Caco-2 (cell line): ENCODE measurements at regions of chr19 and their contacts with region 1.

Region 1: DNA sequence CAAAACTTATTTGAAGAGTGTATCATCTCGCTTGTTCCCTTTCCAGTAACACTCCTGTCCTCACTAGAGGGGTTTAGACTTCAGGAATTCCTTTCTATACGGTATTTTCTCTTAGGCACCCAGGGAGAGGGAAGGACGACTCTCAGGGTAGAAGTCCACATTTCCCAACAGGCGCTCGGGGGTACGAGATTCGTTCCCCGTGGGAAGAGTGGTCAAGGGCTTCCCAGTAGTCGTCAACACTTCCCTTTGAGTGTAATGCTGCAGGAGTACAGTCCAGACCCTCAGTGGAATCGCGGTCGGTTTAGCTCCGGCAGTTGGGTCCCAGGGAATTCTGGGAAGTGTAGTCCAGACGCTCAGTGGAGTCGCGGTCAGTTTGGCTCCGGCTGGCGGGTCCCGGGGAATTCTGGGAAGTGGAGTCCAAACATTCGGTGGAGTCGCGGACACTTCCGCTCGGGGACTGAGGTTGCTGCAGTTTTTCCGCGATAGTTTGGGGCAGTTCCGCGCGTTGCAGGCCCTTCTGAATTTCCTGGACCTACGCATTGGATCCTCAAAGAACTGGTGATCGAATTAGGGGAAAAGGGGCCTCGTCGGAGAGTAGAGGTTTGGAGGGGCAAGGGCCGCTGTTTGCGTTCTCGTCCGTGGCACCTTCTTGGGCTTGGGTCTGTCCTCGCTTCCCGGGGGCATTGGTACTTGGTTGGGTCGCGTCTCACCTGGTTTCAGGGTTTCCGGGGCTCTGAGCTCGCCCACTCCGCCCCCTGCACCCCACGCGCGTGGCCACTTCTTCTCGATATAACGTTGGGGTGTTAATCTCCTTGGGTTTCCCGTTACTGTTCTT is at the start of gene ZNF224:
- DNase-seq: peak; percentile 92 to 94
- H3K4me3 ChIP-seq: peak within 1 kb of the TSS; percentile 74
- H3K4me3 Mint-ChIP-seq: peak within 1 kb of the TSS; percentile 92
- H3K27ac Mint-ChIP-seq: peak within 1 kb of the TSS; percentile 90
- H3K4me1 ChIP-seq: no peaks in the 10 kb centered on the region
- H3K4me1 Mint-ChIP-seq: no peaks in the 10 kb centered on the region
- H3K27me3 ChIP-seq: no peaks in the 10 kb centered on the region
- H3K27me3 Mint-ChIP-seq: no peaks in the 10 kb centered on the region
- CTCF ChIP-seq: no peak
- total RNA-seq, gene ZNF224: 24.7 and 25.9 TPM in 2 replicates

Region 2: DNA sequence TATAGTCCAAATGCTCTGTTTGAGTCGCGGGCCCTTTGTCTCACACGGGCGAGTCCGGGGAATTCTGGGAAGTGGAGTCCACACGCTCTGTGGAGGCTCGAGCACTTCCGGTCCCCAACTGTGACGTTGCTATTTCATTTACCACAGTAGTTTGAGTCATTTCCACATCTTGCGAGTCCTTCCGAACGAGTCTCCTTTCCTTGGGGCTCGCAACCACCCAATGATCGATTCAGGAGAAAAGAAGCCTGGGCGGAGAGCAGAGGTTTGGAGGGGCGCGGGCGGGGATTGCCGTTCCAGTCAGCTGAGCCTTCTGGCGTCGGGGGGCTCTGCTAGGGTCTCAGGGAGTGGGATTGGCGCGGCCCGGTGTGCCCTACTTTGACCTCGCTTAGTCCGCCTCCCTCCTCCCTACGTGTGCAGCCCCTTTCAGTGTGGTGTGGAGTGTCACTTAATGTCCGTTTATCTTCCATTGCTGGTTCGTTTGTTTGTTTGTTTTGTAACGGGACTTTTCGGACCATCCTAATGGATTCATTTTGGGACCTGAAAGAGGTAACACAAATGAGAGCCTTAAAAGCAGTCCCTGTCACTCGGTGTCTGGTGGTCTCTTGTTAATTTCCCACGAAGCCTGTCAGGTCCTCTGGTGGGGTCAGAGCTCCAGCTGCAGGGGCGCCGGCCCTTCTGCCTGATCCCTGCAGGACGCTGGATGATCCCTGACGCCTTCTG is 68.8 kb before region 1 on chr19 and contains the start of gene ZNF222:
- CTCF ChIA-PET with region 1: no interaction called
- POLR2A ChIA-PET with region 1: no interaction called
- intact Hi-C with region 1: loop called (anchors 1 kb)
- DNase-seq: peak; percentile 75 to 83
- H3K4me3 ChIP-seq: peak within 1 kb of the TSS; percentile 84
- H3K4me3 Mint-ChIP-seq: peak within 1 kb of the TSS; percentile 99
- H3K27ac Mint-ChIP-seq: peak within 1 kb of the TSS; percentile 96
- H3K4me1 ChIP-seq: peaks cover 14% of the 10 kb centered on the region
- H3K4me1 Mint-ChIP-seq: peaks cover 12% of the 10 kb centered on the region
- H3K27me3 ChIP-seq: no peaks in the 10 kb centered on the region
- H3K27me3 Mint-ChIP-seq: peaks cover 5% of the 10 kb centered on the region
- CTCF ChIP-seq: no peak
- total RNA-seq, gene ZNF222: 4.4 and 5.6 TPM in 2 replicates

Region 3: DNA sequence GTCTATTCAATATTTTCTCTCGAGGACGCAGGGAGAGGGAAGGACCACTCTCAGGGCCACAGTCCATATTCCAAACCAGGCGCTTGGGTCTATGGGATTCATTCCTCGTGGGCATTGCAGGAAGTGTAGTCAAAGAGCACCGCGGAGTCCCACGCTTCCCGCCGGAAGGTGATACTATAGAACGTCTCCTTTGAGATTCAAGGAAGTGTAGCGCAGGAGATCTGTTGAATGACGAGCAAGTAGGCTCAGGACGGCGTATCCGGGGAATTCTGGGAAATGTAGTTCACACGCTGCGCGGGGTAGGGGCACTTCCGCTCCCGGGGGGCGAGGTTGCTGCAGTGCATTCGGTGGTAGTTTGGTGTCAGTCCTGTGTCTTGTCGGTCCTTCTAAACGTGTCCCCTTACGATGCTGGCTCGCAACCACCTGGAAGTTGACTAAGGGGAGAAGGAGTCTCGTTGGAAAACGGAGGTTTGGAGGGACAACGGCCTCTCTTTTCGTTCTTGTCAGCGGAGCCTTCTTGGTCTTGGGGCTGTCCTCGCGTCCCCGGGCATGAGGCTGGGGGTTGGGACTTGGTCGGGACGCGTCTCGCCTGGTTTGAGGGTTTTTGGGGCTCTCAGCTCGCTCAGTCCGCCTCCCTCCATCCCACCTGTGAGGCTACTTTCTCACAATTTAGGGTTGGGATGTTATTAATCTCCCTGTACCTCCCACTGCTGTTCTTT is 22.2 kb before region 1 on chr19 and contains the start of gene ZNF284:
- CTCF ChIA-PET with region 1: interaction called, 3 read pairs
- POLR2A ChIA-PET with region 1: no interaction called
- intact Hi-C with region 1: loop called (anchors 1 kb)
- DNase-seq: peak; percentile 91 to 94
- H3K4me3 ChIP-seq: peak within 1 kb of the TSS; percentile 77
- H3K4me3 Mint-ChIP-seq: peak within 1 kb of the TSS; percentile 83
- H3K27ac Mint-ChIP-seq: peak within 1 kb of the TSS; percentile 85
- H3K4me1 ChIP-seq: peaks cover 3% of the 10 kb centered on the region; the same call in 1 of the 2 replicates
- H3K4me1 Mint-ChIP-seq: peaks cover 14% of the 10 kb centered on the region
- H3K27me3 ChIP-seq: no peaks in the 10 kb centered on the region
- H3K27me3 Mint-ChIP-seq: no peaks in the 10 kb centered on the region
- CTCF ChIP-seq: no peak
- total RNA-seq, gene ZNF284: 2.3 and 3.6 TPM in 2 replicates

Region 4: DNA sequence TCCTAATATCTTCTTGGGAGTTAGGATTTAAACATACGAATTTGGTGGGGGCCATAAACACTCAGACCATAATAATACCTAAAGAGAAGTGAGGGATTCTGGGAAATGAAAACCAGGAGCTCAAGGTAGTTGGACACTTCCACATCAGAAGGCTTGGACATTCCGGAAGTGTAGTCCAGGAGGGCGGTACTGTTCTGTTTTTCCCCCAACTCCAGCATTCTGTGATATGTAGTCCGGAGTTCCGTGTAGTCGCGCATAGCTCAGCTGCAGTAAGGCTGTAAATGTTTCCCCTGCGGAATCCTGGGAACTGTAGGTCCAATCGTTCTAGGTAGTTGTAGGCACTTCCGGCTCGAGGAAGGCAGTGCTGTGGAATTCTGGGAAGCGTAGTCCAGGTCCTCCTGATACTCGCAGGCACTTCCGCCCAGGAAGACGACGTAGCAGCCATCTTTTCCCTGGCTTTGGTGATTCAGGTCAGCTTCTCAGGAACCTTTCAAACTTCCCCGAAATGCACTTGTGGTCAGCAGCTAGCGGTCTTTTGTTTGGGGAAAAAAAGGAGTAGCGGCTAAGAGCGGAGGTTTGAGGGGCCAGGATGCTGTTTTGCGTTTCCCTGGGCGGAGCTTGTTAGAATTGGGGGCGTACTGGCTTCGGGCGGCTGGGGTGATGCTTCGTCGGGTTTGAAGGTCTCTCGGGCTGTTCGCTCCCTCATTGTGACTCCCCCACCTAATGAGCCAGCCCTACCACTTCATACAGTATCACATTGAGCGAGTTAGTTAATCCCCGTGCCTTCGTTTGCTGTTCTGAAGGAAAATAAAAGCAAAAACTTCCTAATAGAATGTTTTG is 70.7 kb after region 1 on chr19 and contains the start of gene ZNF226:
- CTCF ChIA-PET with region 1: no interaction called
- POLR2A ChIA-PET with region 1: interaction called, 7 read pairs
- intact Hi-C with region 1: loop called (anchors 1 kb)
- DNase-seq: peak; percentile 95 to 98
- H3K4me3 ChIP-seq: peak within 1 kb of the TSS; percentile 79
- H3K4me3 Mint-ChIP-seq: peak within 1 kb of the TSS; percentile 95
- H3K27ac Mint-ChIP-seq: peak within 1 kb of the TSS; percentile 98
- H3K4me1 ChIP-seq: 0 out of 2 replicates have a peak, but pooled peaks cover 10% of the 10 kb centered on the region
- H3K4me1 Mint-ChIP-seq: no peaks in the 10 kb centered on the region
- H3K27me3 ChIP-seq: no peaks in the 10 kb centered on the region
- H3K27me3 Mint-ChIP-seq: no peaks in the 10 kb centered on the region
- CTCF ChIP-seq: no peak
- total RNA-seq, gene ZNF226: 27.0 and 28.0 TPM in 2 replicates